Left ventricle myocardium inferior (tissue), 1 donor: ENCODE measurements at regions of chr11 and their contacts with region 1.

Region 1: DNA sequence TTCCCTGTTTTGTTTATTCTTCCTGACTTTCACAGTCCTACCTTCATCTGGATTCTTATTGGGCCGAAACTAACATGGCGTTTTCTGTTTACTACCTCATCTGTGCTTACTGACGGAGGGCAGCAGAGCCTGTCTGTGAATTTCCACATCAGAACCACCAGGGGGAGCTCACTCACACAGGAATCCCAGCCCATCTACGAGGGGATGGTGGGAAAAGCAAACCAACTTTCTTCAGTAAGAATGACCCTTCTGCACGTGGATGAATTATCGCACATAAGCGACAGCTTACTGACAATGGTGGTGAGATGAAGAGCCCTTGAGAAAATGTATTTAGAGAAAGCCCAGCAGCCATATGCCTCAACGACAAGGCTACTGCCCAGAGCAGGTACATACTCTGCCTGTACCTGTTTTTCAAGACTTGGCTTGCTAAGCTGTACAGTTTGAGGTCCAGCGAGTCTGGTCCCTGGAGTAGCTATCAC is 42.5 kb downstream of the LARGE2 start:
- DNase-seq: peak; percentile 24
- H3K4me3 ChIP-seq: no peak overlapping the region
- H3K27ac ChIP-seq: peak overlapping the region; percentile 30
- H3K4me1 ChIP-seq: peaks cover 18% of the 10 kb centered on the region
- H3K27me3 ChIP-seq: no peaks in the 10 kb centered on the region
- CTCF ChIP-seq: peak; percentile 95

Region 2: DNA sequence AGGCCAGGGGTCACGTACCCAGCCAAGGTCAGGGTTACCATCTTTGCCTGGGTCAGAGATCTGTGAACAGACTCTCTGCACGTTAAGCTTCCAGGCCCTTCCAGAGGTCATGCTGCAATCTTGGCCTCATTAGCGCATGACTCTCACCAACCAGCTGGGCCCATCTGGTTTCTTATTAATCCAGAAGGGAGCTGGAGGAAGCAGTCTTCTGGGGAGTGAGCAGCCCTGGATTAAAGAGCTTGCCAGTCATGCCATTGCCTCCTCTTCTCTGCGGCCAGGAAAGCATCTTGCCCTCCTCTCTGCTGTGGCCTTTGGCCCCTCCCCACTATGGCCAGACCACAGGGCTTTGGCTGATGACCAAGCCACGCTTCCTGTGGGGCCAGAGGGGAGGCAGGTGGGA is 357.0 kb before region 1 on chr11:
- intact Hi-C with region 1: no loop called
- DNase-seq: peak; percentile 50
- H3K4me3 ChIP-seq: no peak overlapping the region
- H3K27ac ChIP-seq: no peak overlapping the region
- H3K4me1 ChIP-seq: peaks cover 42% of the 10 kb centered on the region
- H3K27me3 ChIP-seq: peaks cover 41% of the 10 kb centered on the region
- CTCF ChIP-seq: no peak

Region 3: DNA sequence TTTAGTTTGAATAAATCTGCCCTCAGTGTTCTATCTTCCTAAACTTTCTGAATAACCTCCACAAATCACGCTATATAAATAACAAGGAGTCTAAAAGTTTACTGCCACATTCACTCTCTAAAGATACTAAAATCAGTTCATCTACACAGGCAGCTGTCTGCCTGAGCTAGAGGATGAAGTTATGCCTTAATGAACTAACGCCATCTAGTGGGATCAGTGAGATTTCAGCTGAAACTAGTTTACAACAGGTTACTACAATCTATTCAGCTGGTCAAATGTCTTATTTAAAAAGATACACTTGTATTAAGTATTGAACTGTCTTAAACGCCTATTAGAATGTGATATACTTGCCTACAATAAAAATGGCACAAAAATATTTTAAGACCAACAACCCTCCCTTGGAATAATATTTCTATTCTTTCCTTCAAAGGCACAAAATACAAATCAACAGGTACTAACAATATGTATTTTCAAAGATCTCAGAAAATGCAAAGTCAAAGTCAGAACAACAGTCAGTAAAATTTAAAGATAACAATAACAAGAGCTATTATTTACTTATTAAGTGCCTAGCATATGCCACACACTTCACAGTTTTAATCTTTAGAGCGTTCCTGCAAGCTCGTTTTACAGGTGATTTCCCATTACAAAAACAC is 41.6 kb after region 1 on chr11:
- intact Hi-C with region 1: loop called (anchors 5 kb)
- DNase-seq: no peak
- H3K4me3 ChIP-seq: no peak overlapping the region
- H3K27ac ChIP-seq: no peak overlapping the region
- H3K4me1 ChIP-seq: peaks cover 37% of the 10 kb centered on the region
- H3K27me3 ChIP-seq: no peaks in the 10 kb centered on the region
- CTCF ChIP-seq: peak; percentile 88